H1 (cell line): ENCODE measurements at regions of chr1 and their contacts with region 1.

Region 1: DNA sequence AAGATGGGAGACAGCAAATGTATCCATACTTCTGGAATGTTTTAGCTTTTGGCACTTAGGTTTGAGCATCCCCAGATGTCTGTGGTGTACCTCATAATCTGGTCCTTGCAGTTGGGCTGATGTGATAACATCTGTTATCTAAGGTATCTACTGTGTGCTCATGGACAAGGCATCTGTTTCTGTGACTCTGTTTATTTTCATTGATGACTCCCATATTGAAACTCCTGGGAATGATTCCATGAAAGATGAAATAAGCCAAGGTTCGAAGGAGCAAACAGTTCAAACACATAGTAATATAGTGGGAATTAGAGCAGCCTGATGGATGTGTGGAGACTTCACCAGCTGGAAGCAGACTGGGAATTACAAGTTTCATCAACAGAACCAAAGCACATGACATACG is 20.7 kb upstream of the TRIM45 start:
- DNase-seq: no peak
- H3K4me3 ChIP-seq: no peak overlapping the region
- H3K27ac ChIP-seq: no peak overlapping the region
- H3K4me1 ChIP-seq: peaks cover 0 to 8% (median under 1%) of the 10 kb centered on the region in 4 experiments; a peak in 4 of 7 replicates
- H3K27me3 ChIP-seq: no peaks in the 10 kb centered on the region
- CTCF ChIP-seq: no peak
- EP300 ChIP-seq: no peak
- POLR2A ChIP-seq: no peak
- RAD21 ChIP-seq: no peak

Region 2: DNA sequence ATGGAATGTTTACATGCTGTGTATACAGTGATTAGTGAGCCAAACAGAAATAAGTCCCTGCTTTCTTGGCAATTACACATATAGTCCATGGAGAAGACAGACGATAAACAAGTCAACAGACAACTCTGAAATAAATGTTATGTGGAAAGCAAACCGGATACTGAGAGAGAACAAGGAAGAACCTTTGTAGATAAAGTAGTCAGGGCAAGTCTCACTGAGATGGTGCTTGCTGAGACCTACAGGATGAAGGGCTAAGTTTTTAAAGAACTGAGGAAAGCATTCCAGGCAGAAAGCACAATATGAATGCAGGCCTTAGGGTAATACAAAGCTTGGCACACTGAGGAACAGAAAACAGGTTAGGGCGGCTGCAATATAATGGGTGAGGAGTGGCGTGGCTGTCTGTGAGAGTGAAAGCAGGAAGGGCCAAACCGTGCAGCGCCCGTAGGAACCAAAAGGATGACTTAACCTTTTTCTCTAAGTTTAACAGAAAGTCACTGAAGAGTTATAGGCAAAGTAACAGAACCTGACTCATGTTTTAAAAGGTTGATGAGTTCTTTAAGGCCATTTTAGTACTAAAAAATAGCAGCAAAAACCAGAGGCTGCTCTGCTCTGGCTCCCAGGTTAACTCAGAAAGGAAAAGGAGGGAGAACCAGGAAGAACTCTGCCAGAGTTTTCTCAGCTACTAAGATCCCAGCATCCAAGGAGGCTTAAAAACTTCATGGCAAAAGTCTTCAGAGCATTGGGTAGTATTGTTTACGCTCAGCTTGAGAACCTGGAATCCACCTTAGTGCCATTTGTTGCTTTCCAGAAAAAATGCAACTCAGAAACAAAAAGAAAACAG is 90.8 kb before region 1 on chr1:
- CTCF ChIA-PET with region 1: no interaction called
- POLR2A ChIA-PET with region 1: no interaction called
- DNase-seq: no peak
- H3K4me3 ChIP-seq: no peak overlapping the region
- H3K27ac ChIP-seq: no peak overlapping the region
- H3K4me1 ChIP-seq: no peaks in the 10 kb centered on the region
- H3K27me3 ChIP-seq: no peaks in the 10 kb centered on the region
- CTCF ChIP-seq: no peak
- EP300 ChIP-seq: no peak
- POLR2A ChIP-seq: no peak
- RAD21 ChIP-seq: no peak

Region 3: GRCh38 chr1:117128323-117129079 is 13.7 kb before region 1 on chr1:
- CTCF ChIA-PET with region 1: interaction called, 17 read pairs
- POLR2A ChIA-PET with region 1: no interaction called
- DNase-seq: no peak
- H3K4me3 ChIP-seq: no peak overlapping the region
- H3K27ac ChIP-seq: no peak overlapping the region
- H3K4me1 ChIP-seq: peaks cover 0 to 4% (median 1%) of the 10 kb centered on the region in 4 experiments; a peak in 2 of 7 replicates
- H3K27me3 ChIP-seq: no peaks in the 10 kb centered on the region; a peak in 1 of 7 replicates
- CTCF ChIP-seq: peak in 1 of 3 experiments; percentile 31; a peak in 2 of 4 replicates
- EP300 ChIP-seq: no peak
- POLR2A ChIP-seq: no peak
- RAD21 ChIP-seq: peak; percentile 28 to 30